Activated CD4-positive, alpha-beta T cell treated with anti-CD3 and anti-CD28 coated beads for 36 hours (primary cell): ENCODE measurements at regions of chr20 and their contacts with region 1.

Region 1: GRCh38 chr20:35092524-35093266 is at the start of gene TRPC4AP:
- DNase-seq: peak; percentile 95
- ATAC-seq: peak; percentile 88
- H3K4me3 Mint-ChIP-seq: peak within 1 kb of the TSS; percentile 90
- H3K27ac Mint-ChIP-seq: peak within 1 kb of the TSS; percentile 100
- H3K4me1 Mint-ChIP-seq: peaks cover 52% of the 10 kb centered on the region
- H3K27me3 Mint-ChIP-seq: no peaks in the 10 kb centered on the region
- total RNA-seq, gene TRPC4AP: 36.0 to 39.6 TPM

Region 2: DNA sequence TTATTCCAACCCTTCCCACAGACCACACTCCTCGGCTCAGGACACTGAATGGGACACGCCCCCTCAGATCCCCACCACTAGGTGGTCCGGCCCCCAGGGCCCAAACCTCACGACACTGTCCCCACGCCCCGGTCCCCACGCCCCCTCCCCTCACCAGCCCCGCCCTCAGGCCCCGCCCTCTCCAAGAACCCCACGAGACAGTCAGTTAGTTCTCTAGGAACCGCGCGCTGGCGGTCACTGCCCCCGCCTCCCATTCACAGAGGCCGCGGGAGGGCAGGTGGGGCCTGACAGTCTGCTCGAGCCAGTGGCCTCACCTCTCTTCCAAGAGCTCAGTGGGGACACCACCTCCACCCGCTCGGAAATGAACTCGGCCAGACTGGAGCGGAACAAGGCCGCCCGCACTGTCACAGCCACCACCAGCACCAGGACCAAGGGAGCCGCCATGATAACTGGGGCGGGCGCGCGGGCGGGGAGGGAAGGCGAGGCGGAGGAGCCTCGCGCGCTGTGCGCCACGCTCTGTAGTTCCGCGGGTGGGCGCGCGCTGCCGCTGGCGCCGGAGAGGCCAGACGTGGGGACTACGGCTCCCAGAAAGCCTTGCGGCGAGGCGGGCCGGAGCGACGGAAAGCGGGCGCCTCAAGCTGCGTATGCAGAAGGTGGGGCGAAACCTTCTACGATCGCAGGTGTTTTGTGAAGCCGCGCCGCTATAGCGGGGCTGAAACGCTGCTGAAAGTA is 415.9 kb before region 1 on chr20 and contains the start of gene PIGU:
- CTCF ChIA-PET with region 1: no interaction called
- POLR2A ChIA-PET with region 1: interaction called, 5 read pairs
- intact Hi-C with region 1: loop called in 1 of 2 experiments (anchors 2 kb)
- DNase-seq: peak; percentile 98
- ATAC-seq: peak; percentile 97
- H3K4me3 Mint-ChIP-seq: peak within 1 kb of the TSS; percentile 97
- H3K27ac Mint-ChIP-seq: peak within 1 kb of the TSS; percentile 96
- H3K4me1 Mint-ChIP-seq: peaks cover 34% of the 10 kb centered on the region
- H3K27me3 Mint-ChIP-seq: no peaks in the 10 kb centered on the region
- total RNA-seq, gene PIGU: 21.1 to 28.2 TPM

Region 3: GRCh38 chr20:34689486-34689885 is 403.2 kb before region 1 on chr20:
- CTCF ChIA-PET with region 1: no interaction called
- POLR2A ChIA-PET with region 1: no interaction called
- intact Hi-C with region 1: no loop called
- DNase-seq: no peak
- ATAC-seq: no peak
- H3K4me3 Mint-ChIP-seq: no peak overlapping the region
- H3K27ac Mint-ChIP-seq: no peak overlapping the region
- H3K4me1 Mint-ChIP-seq: no peaks in the 10 kb centered on the region
- H3K27me3 Mint-ChIP-seq: no peaks in the 10 kb centered on the region

Region 4: GRCh38 chr20:34955232-34956040 is 137.3 kb before region 1 on chr20 and contains the starts of genes GSS and MYH7B:
- CTCF ChIA-PET with region 1: interaction called, 6 read pairs
- POLR2A ChIA-PET with region 1: no interaction called
- intact Hi-C with region 1: loop called (anchors 1 to 2 kb)
- DNase-seq: peak; percentile 99
- ATAC-seq: peak; percentile 95
- H3K4me3 Mint-ChIP-seq: peak within 1 kb of the TSS; percentile 98
- H3K27ac Mint-ChIP-seq: peak within 1 kb of the TSS; percentile 94
- H3K4me1 Mint-ChIP-seq: peaks cover 16% of the 10 kb centered on the region
- H3K27me3 Mint-ChIP-seq: no peaks in the 10 kb centered on the region
- total RNA-seq, gene GSS: 58.7 to 59.5 TPM
- total RNA-seq, gene MYH7B: 0.23 to 0.40 TPM

Region 5: GRCh38 chr20:35207950-35208611 is 115.4 kb after region 1 on chr20:
- CTCF ChIA-PET with region 1: interaction called, 15 read pairs
- POLR2A ChIA-PET with region 1: no interaction called
- intact Hi-C with region 1: loop called (anchors 1 kb)
- DNase-seq: peak; percentile 88
- ATAC-seq: peak; percentile 95
- H3K4me3 Mint-ChIP-seq: no peak overlapping the region
- H3K27ac Mint-ChIP-seq: no peak overlapping the region
- H3K4me1 Mint-ChIP-seq: no peaks in the 10 kb centered on the region
- H3K27me3 Mint-ChIP-seq: no peaks in the 10 kb centered on the region

Region 6: GRCh38 chr20:35284267-35284991 is 191.7 kb after region 1 on chr20 and contains the start of gene EIF6:
- CTCF ChIA-PET with region 1: no interaction called
- POLR2A ChIA-PET with region 1: no interaction called
- intact Hi-C with region 1: loop called in 1 of 2 experiments (anchors 1 kb)
- DNase-seq: peak; percentile 88
- ATAC-seq: peak; percentile 85
- H3K4me3 Mint-ChIP-seq: peak within 1 kb of the TSS; percentile 81
- H3K27ac Mint-ChIP-seq: peak within 1 kb of the TSS; percentile 91
- H3K4me1 Mint-ChIP-seq: peaks cover 23% of the 10 kb centered on the region
- H3K27me3 Mint-ChIP-seq: no peaks in the 10 kb centered on the region
- total RNA-seq, gene EIF6: 110 to 124 TPM

Region 7: GRCh38 chr20:35454881-35455609 is 362.4 kb after region 1 on chr20 and contains the start of gene CEP250:
- CTCF ChIA-PET with region 1: interaction called, 3 read pairs
- POLR2A ChIA-PET with region 1: no interaction called
- intact Hi-C with region 1: loop called in 1 of 2 experiments (anchors 2 kb)
- DNase-seq: peak; percentile 98
- ATAC-seq: peak; percentile 97
- H3K4me3 Mint-ChIP-seq: peak within 1 kb of the TSS; percentile 79
- H3K27ac Mint-ChIP-seq: peak within 1 kb of the TSS; percentile 97
- H3K4me1 Mint-ChIP-seq: peaks cover 27% of the 10 kb centered on the region
- H3K27me3 Mint-ChIP-seq: no peaks in the 10 kb centered on the region
- total RNA-seq, gene CEP250: 50.4 to 60.2 TPM

Region 8: DNA sequence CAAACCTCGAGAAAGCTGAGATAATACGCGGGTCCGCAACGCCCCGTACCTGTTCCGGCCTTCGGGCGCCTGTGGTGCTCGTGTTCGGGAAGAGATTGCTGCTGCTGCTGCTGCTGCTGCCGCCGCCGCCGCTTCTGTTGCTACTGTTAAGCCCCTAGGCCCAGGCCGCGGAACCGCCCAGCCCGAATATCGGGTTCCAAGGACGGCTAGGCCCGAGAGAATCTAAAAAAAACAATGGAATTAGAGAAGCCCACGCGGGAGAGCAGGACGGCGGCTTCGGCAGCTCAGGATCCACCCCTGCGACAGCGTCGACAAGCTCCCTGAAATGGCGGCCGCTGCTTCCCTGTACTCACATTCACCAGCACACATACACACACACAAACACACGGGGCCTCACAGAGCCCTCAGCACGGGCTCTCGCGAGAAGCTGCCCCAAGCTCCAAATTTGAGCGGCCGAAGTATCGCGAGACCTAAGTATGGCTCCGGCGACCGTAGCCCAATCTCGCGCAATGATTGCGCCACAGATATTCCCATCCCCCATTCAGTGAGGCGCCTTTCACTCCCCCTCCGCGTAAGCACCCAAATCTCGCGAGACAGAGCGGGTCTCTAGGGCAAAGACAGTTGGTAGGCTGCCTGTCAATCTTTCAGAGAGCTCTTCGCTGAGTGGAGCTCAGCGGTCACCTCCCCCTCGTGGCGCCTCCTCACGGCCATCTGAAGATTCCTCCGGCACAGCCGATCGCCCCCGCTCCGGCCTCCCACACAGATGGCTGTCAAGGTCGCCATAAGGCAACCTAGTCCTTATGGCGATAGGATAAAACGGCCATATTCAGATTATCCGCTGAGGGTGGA is 649.4 kb after region 1 on chr20 and contains the start of gene RBM39:
- CTCF ChIA-PET with region 1: no interaction called
- POLR2A ChIA-PET with region 1: no interaction called
- intact Hi-C with region 1: loop called in 1 of 2 experiments (anchors 5 kb)
- DNase-seq: peak; percentile 100
- ATAC-seq: peak; percentile 88
- H3K4me3 Mint-ChIP-seq: peak within 1 kb of the TSS; percentile 90
- H3K27ac Mint-ChIP-seq: peak within 1 kb of the TSS; percentile 100
- H3K4me1 Mint-ChIP-seq: peaks cover 45% of the 10 kb centered on the region
- H3K27me3 Mint-ChIP-seq: no peaks in the 10 kb centered on the region
- total RNA-seq, gene RBM39: 303 to 356 TPM